ENCODE measurements at regions of chr20 and their contacts with region 1.

Region 1: GRCh38 chr20:36604952-36605398 is 604 bp upstream of the RAB5IF start:
- DNase-seq: no peak
- H3K4me3 ChIP-seq: peak overlapping the region; percentile 97
- H3K4me1 ChIP-seq: peaks cover 5% of the 10 kb centered on the region
- H3K27me3 ChIP-seq: no peaks in the 10 kb centered on the region

Region 2: DNA sequence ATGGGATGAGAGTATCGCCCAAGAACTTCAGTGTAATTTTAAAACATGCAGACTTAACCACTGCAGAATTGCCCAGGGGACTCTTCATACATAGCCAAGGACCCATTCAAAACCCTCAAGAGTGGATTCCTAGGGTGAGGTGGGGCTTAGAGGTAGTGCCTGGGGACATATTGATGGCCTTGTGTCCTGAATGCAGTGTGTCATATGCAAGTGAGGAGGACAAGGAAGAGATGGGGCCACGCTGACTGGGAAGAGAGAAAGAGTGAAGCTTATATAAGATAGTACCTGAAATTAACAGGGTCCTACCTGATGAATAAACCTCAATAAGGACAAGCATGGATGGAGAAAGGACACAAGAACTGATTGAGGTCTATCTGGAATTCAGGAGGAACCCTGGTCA is 49.7 kb before region 1 on chr20:
- in situ Hi-C with region 1: loop called (anchors 5 kb)
- DNase-seq: no peak
- H3K4me3 ChIP-seq: no peak overlapping the region
- H3K4me1 ChIP-seq: no peaks in the 10 kb centered on the region
- H3K27me3 ChIP-seq: no peaks in the 10 kb centered on the region